Activated CD4-positive, alpha-beta memory T cell treated with anti-CD3 and anti-CD28 coated beads for 36 hours (primary cell): ENCODE measurements at regions of chr1 and their contacts with region 1.

Region 1: GRCh38 chr1:9724706-9725476 is 73.4 kb downstream of the PIK3CD start:
- DNase-seq: peak; percentile 80
- H3K4me3 Mint-ChIP-seq: no peak overlapping the region
- H3K27ac Mint-ChIP-seq: peak overlapping the region; percentile 52
- H3K4me1 Mint-ChIP-seq: peaks cover 48% of the 10 kb centered on the region
- H3K27me3 Mint-ChIP-seq: no peaks in the 10 kb centered on the region

Region 2: GRCh38 chr1:9588551-9589143 is 136.2 kb before region 1 on chr1 and contains the start of gene TMEM201:
- CTCF ChIA-PET with region 1: no interaction called
- POLR2A ChIA-PET with region 1: no interaction called
- intact Hi-C with region 1: loop called (anchors 5 kb)
- DNase-seq: peak; percentile 95
- H3K4me3 Mint-ChIP-seq: peak within 1 kb of the TSS; percentile 82
- H3K27ac Mint-ChIP-seq: peak within 1 kb of the TSS; percentile 35
- H3K4me1 Mint-ChIP-seq: peaks cover 31% of the 10 kb centered on the region
- H3K27me3 Mint-ChIP-seq: no peaks in the 10 kb centered on the region
- total RNA-seq, gene TMEM201: 12.2 to 14.0 TPM

Region 3: GRCh38 chr1:9689011-9689706 is 35.7 kb before region 1 on chr1:
- CTCF ChIA-PET with region 1: interaction called, 10 read pairs
- POLR2A ChIA-PET with region 1: no interaction called
- intact Hi-C with region 1: no loop called
- DNase-seq: peak; percentile 85
- H3K4me3 Mint-ChIP-seq: peak overlapping the region; percentile 64
- H3K27ac Mint-ChIP-seq: no peak overlapping the region
- H3K4me1 Mint-ChIP-seq: peaks cover 70% of the 10 kb centered on the region
- H3K27me3 Mint-ChIP-seq: no peaks in the 10 kb centered on the region

Region 4: GRCh38 chr1:9784508-9785133 is 59.7 kb after region 1 on chr1:
- CTCF ChIA-PET with region 1: interaction called, 11 read pairs
- POLR2A ChIA-PET with region 1: no interaction called
- intact Hi-C with region 1: no loop called
- DNase-seq: peak; percentile 76
- H3K4me3 Mint-ChIP-seq: no peak overlapping the region
- H3K27ac Mint-ChIP-seq: no peak overlapping the region
- H3K4me1 Mint-ChIP-seq: peaks cover 28% of the 10 kb centered on the region
- H3K27me3 Mint-ChIP-seq: no peaks in the 10 kb centered on the region

Region 5: GRCh38 chr1:9823943-9824701 is 99.2 kb after region 1 on chr1 and contains the start of gene CLSTN1:
- CTCF ChIA-PET with region 1: interaction called, 3 read pairs
- POLR2A ChIA-PET with region 1: no interaction called
- intact Hi-C with region 1: loop called (anchors 5 kb)
- DNase-seq: peak; percentile 93
- H3K4me3 Mint-ChIP-seq: peak within 1 kb of the TSS; percentile 94
- H3K27ac Mint-ChIP-seq: peak within 1 kb of the TSS; percentile 77
- H3K4me1 Mint-ChIP-seq: peaks cover 46% of the 10 kb centered on the region
- H3K27me3 Mint-ChIP-seq: no peaks in the 10 kb centered on the region
- total RNA-seq, gene CLSTN1: 33.6 to 34.1 TPM

Region 6: GRCh38 chr1:9900142-9901043 is 175.5 kb after region 1 on chr1:
- CTCF ChIA-PET with region 1: no interaction called
- POLR2A ChIA-PET with region 1: interaction called, 3 read pairs
- intact Hi-C with region 1: loop called (anchors 5 kb)
- DNase-seq: no peak
- H3K4me3 Mint-ChIP-seq: no peak overlapping the region
- H3K27ac Mint-ChIP-seq: no peak overlapping the region
- H3K4me1 Mint-ChIP-seq: peaks cover 30% of the 10 kb centered on the region
- H3K27me3 Mint-ChIP-seq: no peaks in the 10 kb centered on the region